ENCODE measurements at regions of chr18 and their contacts with region 1.

Region 1: DNA sequence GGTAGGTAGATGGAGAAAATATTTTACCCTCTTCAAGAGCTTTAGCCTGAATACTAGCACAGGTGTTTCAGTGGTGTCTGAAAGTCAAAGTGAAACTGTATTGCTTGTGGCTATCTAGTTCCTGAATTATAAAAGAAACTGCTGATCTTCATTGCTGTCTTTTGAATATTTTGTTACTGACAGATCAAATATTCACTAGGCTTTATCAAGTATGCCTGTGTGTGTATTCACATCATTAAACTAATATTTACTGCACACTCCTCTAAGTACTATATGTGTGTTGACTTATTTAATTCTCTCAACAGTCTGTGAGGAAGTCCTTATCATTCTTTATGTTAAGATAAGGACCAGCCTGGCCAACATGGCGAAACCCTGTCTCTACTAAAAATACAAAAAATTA is 139.6 kb downstream of the SOCS6 start:
- DNase-seq: no peak

Region 2: DNA sequence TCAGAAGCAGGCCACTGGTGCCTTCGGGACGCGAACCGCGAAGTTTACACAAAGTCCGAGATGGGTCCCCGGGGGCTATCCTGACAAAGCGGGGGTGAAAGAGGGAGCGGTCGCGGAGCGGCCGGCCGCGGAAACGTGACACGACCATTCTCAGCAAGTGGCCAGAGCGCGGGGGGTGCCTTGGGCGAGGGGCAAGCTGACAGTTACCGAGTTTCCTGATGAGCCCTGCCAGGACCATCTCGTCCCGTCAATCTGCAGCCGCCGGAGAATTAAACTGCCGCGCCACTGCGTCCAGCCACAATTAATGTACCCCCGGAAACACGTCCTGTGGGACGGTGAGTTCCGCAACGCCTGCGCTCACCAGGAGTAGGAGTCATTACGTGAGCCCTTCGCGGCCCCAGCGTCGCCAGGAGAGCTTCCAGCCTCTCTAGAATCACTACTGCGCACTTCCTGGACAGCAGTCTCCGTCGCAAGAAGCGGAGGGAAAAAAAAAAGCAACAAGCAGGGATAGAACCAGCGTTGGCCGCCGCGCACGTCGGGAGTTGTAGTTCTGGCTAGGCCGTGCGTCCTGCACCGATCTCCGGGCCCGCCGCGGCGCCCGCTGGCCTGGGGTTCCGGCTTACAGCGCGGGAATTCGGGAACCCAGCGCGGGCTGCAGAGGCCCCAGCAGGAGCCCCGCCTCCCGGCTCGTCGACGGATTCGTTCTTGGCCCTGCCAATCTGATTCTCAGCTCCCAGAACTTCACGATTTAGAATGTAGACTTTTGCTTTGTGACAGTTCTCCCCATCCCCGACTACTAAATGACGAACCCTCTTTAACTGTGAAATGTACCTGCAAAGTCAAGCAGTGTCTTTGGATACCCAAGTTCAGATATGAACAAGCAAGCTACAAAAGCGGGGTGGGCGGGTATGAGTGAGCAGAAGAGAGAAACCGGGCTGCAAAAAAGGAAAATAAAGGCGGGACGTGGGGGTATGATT is 222.7 kb before region 1 on chr18 and contains the start of gene RTTN:
- in situ Hi-C with region 1: loop called (anchors 25 kb)
- DNase-seq: peak; percentile 97

Region 3: GRCh38 chr18:70288171-70288850 is 140.1 kb before region 1 on chr18:
- in situ Hi-C with region 1: no loop called
- DNase-seq: peak; percentile 30

Region 4: DNA sequence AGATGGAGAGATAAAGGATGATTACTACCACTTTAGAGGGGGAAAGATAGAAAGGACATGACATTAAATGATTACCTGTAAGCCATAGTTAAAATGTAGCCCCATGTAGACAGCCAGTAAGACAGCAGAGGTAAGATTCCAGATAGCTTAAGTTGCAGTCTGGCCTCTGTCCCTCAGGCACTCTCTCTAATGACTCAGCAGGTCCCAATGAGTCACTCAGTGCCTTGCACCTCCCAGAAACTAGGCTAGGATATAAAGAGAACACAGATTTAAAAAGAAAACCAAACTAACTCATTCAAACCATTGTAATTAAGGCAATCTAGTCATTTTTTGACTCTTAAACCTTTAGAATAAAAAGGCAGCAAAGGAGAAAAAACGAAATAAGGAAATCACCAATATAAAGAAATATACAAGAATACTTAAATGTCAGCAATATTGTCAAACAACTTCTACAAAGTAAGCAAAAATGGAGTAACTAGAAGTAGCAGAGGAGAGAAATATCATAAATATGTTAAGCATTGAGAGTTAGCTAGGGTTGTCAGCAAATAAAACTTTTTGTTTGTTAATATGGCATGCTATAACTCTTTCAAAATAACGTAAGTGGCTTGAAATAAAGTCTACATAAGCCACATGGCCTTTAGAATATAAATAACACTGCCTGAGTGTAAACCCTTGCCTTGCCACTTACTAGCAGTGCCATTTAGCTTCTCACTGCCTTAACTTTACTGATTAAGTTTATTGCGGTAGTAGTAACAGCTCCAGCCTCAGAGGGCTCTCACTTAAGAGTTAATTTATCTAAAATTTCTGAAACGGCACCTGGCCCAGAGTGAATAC is 91.1 kb before region 1 on chr18:
- in situ Hi-C with region 1: no loop called
- DNase-seq: no peak

Measured in KBM-7 (cell line).